Cardiac septum (tissue), 1 donor: ENCODE measurements at regions of chr9 and their contacts with region 1.

Region 1: GRCh38 chr9:97721396-97721795 is 24.3 kb upstream of the XPA start:
- DNase-seq: no peak

Region 2: GRCh38 chr9:97675655-97676054 is 45.7 kb before region 1 on chr9:
- intact Hi-C with region 1: no loop called
- DNase-seq: no peak

Region 3: GRCh38 chr9:97773723-97774122 is 52.3 kb after region 1 on chr9:
- intact Hi-C with region 1: no loop called
- DNase-seq: no peak

Region 4: GRCh38 chr9:97880336-97880735 is 158.9 kb after region 1 on chr9:
- intact Hi-C with region 1: loop called (anchors 5 kb)
- DNase-seq: no peak